Colonic mucosa (tissue), 4 donors: ENCODE measurements at regions of chr11 and their contacts with region 1.

Region 1: DNA sequence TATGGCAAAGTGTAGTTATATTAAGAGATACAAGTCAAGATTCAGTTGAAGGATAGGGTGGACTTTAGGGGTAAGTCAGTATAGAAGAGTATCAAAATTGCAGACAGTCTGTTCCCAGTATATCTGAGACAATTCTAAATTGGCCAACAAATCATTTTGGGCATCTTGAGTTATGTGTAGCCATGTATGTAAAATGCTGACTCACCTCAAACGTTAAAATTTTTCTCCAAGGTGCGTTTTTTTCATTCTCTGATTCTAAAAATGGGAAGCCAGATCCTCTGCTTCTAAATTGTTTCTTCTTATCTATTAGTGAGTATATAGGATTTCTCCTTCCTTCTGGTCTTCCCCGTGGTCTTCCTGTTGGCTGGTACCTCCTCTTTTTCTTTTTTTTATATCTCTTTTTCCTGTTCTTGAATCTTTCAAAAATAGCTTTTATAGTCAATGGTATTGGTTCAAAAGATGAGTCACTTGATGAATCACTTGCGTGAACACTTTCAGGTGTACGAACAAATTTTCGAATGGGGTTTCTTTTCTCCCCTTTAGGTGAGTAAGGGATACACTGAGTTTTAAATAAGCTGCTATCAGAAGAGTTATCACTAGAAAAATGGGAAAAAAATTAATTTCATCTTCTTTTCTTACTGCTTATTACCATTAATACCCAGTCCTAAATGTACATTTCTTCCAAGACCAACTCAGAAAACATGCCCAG is 3.2 kb downstream of the TAF1D start:
- DNase-seq: no peak
- H3K4me3 ChIP-seq: no peak overlapping the region
- H3K27ac ChIP-seq: no peak overlapping the region
- H3K4me1 ChIP-seq: peaks cover 24% of the 10 kb centered on the region
- H3K27me3 ChIP-seq: no peaks in the 10 kb centered on the region
- CTCF ChIP-seq: no peak

Region 2: DNA sequence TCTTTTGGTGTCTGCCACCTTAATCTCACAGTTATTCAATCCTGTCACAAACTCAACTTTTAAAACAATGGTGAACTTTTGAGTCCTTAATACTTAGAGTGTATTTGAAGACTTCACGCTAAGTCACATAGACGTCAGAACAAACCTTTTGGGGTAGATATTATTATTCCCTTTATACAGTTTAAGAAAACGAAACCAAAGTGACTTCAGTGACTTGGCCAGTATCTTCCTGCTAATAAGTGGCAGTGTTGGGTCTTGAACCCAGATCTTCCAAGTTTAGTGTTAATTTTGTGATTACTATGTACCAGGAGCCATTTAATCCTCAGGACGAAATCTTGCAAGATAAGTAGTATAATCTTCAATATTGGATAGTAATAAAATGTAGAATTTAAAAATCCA is 75.9 kb before region 1 on chr11:
- intact Hi-C with region 1: loop called (anchors 5 kb)
- DNase-seq: no peak
- H3K4me3 ChIP-seq: peak overlapping the region; percentile 93
- H3K27ac ChIP-seq: peak overlapping the region; percentile 92
- H3K4me1 ChIP-seq: peaks cover 9% of the 10 kb centered on the region
- H3K27me3 ChIP-seq: no peaks in the 10 kb centered on the region
- CTCF ChIP-seq: no peak